ENCODE measurements at regions of chr1 and their contacts with region 1.

Region 1: GRCh38 chr1:66253330-66253921 is 280.5 kb upstream of the SGIP1 start:
- DNase-seq: no peak
- ATAC-seq: peak; percentile 91
- H3K4me3 ChIP-seq: no peak overlapping the region
- H3K27ac ChIP-seq: no peak overlapping the region
- H3K4me1 ChIP-seq: no peaks in the 10 kb centered on the region
- H3K27me3 ChIP-seq: no peaks in the 10 kb centered on the region

Region 2: DNA sequence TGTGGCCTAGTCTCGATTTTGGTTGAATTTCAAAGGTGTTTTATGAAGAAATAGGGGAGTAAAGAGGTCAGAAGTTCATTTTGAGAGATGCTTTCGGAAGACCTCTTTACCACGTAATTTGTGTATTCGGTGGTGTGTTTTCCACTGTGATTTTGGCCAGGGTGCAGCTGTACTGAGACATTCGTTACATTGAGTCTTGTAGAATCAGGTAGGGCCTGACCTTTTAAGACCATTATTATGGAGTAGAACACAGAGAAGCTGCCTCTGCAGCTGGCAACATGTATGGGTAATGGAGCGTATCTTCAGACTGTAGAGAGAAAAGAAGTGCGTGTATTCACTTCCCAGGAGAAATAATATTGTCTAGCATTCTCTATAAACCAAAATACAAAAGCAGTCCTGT is 134.3 kb before region 1 on chr1:
- intact Hi-C with region 1: no loop called
- DNase-seq: no peak
- ATAC-seq: no peak
- H3K4me3 ChIP-seq: no peak overlapping the region
- H3K27ac ChIP-seq: no peak overlapping the region
- H3K4me1 ChIP-seq: no peaks in the 10 kb centered on the region
- H3K27me3 ChIP-seq: peaks cover 0 to 3% of the 10 kb centered on the region in 2 donors

Region 3: DNA sequence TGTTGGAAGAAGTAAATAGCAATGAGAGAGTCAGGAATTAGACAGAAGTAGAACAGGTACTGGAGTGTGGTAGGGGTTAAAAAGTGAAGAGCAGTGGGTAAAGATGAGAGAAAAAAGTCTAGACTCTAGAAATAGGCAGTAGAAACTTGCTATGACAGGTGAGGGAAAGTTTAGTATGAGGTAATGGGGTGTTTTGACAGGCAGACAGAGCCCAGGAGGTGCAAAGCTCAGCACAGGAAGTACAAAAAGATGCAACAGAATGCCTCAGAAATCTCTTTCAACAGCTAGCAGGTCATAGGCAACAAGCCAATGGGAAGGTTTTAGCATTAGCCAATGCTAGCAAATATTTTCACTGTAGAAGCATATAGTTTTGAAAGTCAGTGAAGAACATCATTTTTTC is 38.5 kb before region 1 on chr1:
- intact Hi-C with region 1: no loop called
- DNase-seq: no peak
- ATAC-seq: no peak
- H3K4me3 ChIP-seq: no peak overlapping the region
- H3K27ac ChIP-seq: no peak overlapping the region
- H3K4me1 ChIP-seq: no peaks in the 10 kb centered on the region
- H3K27me3 ChIP-seq: no peaks in the 10 kb centered on the region

Region 4: GRCh38 chr1:66503841-66504470 is 250.5 kb after region 1 on chr1:
- intact Hi-C with region 1: loop called (anchors 2 to 10 kb)
- DNase-seq: peak in 1 of 2 donors; percentile 45
- ATAC-seq: peak; percentile 68
- H3K4me3 ChIP-seq: no peak overlapping the region
- H3K27ac ChIP-seq: no peak overlapping the region
- H3K4me1 ChIP-seq: no peaks in the 10 kb centered on the region
- H3K27me3 ChIP-seq: no peaks in the 10 kb centered on the region

Measured in aorta (tissue), 5 donors.